T-cell (primary cell): ENCODE measurements at regions of chr1 and their contacts with region 1.

Region 1: GRCh38 chr1:198681831-198682759 is 43.3 kb downstream of the PTPRC start:
- DNase-seq: peak; percentile 40 to 95 (median 81)
- ATAC-seq: peak; percentile 84 to 90 (median 87)
- H3K4me3 ChIP-seq: peak overlapping the region; percentile 18 to 39
- H3K4me3 Mint-ChIP-seq: peak overlapping the region; percentile 53 to 69 (median 68)
- H3K27ac ChIP-seq: peak overlapping the region; percentile 94
- H3K27ac Mint-ChIP-seq: peak overlapping the region; percentile 94 to 99
- H3K4me1 ChIP-seq: peaks cover 31 to 80% of the 10 kb centered on the region in 2 experiments
- H3K4me1 Mint-ChIP-seq: peaks cover 72 to 86% (median 84%) of the 10 kb centered on the region in 3 donors
- H3K27me3 ChIP-seq: no peaks in the 10 kb centered on the region
- H3K27me3 Mint-ChIP-seq: no peaks in the 10 kb centered on the region

Region 2: GRCh38 chr1:198520524-198521254 is 161.4 kb before region 1 on chr1:
- CTCF ChIA-PET with region 1: interaction called, 6 to 16 read pairs
- POLR2A ChIA-PET with region 1: interaction called, 4 to 11 read pairs
- DNase-seq: peak in 2 of 35 experiments; percentile 3 to 56
- ATAC-seq: peak; percentile 50 to 77 (median 74)
- H3K4me3 ChIP-seq: peak overlapping the region; percentile 15 to 34
- H3K4me3 Mint-ChIP-seq: peak overlapping the region; percentile 55 to 69 (median 68)
- H3K27ac ChIP-seq: peak overlapping the region; percentile 79
- H3K27ac Mint-ChIP-seq: peak overlapping the region; percentile 90
- H3K4me1 ChIP-seq: peaks cover 23 to 49% of the 10 kb centered on the region in 2 experiments
- H3K4me1 Mint-ChIP-seq: peaks cover 67 to 81% (median 70%) of the 10 kb centered on the region in 3 donors
- H3K27me3 ChIP-seq: no peaks in the 10 kb centered on the region
- H3K27me3 Mint-ChIP-seq: no peaks in the 10 kb centered on the region

Region 3: DNA sequence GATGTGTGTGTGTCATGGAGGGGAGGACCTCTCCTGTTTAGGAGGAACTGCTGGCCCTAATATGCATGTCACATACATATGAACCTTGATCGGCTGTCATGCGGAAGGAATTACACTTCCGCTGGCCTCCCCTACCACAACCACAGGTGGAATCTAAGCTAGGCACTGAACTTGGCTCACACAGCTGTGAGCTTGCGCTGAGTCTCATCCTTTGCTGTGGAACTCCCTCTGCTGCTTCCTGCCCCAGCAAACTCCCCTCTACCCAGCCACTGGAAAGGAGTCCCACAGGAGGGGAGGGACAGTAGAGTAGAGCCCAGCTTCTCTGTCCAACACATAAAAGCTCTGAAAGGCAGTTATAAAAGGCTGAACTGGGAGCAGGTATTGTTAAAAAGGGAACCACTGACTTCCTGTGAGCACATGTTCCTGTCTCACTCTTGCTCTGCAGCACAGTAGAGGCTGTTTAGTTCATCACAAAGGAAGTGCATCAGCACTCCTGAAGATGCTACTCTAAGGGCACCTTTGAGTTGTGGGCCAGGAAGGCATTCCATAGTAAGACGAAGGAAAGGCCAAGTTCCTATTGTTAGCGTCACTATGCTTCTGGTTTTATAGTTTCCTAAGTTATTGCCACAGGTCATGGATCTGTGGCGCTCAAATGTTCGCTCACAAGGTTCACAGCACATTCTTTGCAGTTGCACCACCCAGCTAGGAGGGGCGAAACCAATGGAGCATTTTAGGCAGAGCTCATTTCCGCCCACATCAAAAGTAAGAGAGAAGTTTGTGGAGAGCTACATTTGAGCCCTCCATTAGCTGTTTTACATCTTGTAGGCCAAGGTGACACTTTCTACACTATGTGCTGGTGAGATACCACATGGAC is 60.9 kb before region 1 on chr1:
- CTCF ChIA-PET with region 1: interaction called, 3 to 19 read pairs
- POLR2A ChIA-PET with region 1: interaction called, 14 to 15 read pairs
- DNase-seq: peak; percentile 42 to 83 (median 56)
- ATAC-seq: peak; percentile 82 to 85 (median 83)
- H3K4me3 ChIP-seq: peak overlapping the region; percentile 38 to 66
- H3K4me3 Mint-ChIP-seq: peak overlapping the region; percentile 68 to 81 (median 70)
- H3K27ac ChIP-seq: peak overlapping the region; percentile 81
- H3K27ac Mint-ChIP-seq: peak overlapping the region; percentile 98 to 100
- H3K4me1 ChIP-seq: peaks cover 54 to 63% of the 10 kb centered on the region in 2 experiments
- H3K4me1 Mint-ChIP-seq: peaks cover 83 to 93% (median 93%) of the 10 kb centered on the region in 3 donors
- H3K27me3 ChIP-seq: no peaks in the 10 kb centered on the region
- H3K27me3 Mint-ChIP-seq: no peaks in the 10 kb centered on the region

Region 4: DNA sequence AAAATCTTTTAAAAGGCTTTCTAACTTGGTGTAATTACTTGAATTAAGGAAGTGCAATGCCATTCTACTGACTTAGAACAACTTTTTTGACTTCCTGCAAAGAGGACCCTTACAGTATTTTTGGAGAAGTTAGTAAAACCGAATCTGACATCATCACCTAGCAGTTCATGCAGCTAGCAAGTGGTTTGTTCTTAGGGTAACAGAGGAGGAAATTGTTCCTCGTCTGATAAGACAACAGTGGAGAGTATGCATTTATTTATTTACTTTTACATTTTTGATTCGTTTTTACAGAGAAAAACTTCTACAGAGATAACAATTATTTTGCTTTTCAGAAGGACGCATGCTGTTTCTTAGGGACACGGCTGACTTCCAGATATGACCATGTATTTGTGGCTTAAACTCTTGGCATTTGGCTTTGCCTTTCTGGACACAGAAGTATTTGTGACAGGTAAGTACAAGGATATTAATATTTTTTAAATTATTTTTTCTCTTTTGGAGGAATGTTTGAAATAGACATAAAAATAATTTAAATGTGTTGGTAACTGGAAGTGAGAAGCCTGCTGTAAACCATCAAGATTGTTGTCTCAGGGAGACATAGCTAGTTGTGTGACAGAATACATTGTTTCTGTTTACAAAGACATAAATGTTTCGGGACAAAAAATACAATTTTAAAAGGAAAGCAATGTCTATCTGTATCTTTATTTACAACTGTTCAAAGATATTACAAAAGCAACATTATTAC is 43.0 kb before region 1 on chr1 and contains the start of gene PTPRC:
- CTCF ChIA-PET with region 1: interaction called, 3 to 9 read pairs
- POLR2A ChIA-PET with region 1: interaction called, 6 to 25 read pairs
- DNase-seq: peak in 4 of 35 experiments; percentile 23 to 76 (median 26)
- ATAC-seq: peak; percentile 76 to 84 (median 81)
- H3K4me3 ChIP-seq: peak within 1 kb of the TSS; percentile 70 to 80
- H3K4me3 Mint-ChIP-seq: peak within 1 kb of the TSS; percentile 79 to 98 (median 81)
- H3K27ac ChIP-seq: peak within 1 kb of the TSS; percentile 85
- H3K27ac Mint-ChIP-seq: peak within 1 kb of the TSS; percentile 95 to 99
- H3K4me1 ChIP-seq: peaks cover 19 to 48% of the 10 kb centered on the region in 2 experiments
- H3K4me1 Mint-ChIP-seq: peaks cover 52 to 70% (median 59%) of the 10 kb centered on the region in 3 donors
- H3K27me3 ChIP-seq: no peaks in the 10 kb centered on the region
- H3K27me3 Mint-ChIP-seq: no peaks in the 10 kb centered on the region
- total RNA-seq, gene PTPRC: 674 to 984 (median 781) TPM

Region 5: GRCh38 chr1:198651650-198652400 is 30.3 kb before region 1 on chr1:
- CTCF ChIA-PET with region 1: interaction called, 5 to 31 read pairs
- POLR2A ChIA-PET with region 1: interaction called, 6 to 49 read pairs
- DNase-seq: no peak
- ATAC-seq: peak; percentile 27 to 34 (median 31)
- H3K4me3 ChIP-seq: peak overlapping the region in 1 of 2 donors; percentile 27
- H3K4me3 Mint-ChIP-seq: peak overlapping the region; percentile 63 to 81 (median 76)
- H3K27ac ChIP-seq: peak overlapping the region; percentile 87
- H3K27ac Mint-ChIP-seq: peak overlapping the region; percentile 94 to 98
- H3K4me1 ChIP-seq: peaks cover 20 to 80% of the 10 kb centered on the region in 2 experiments
- H3K4me1 Mint-ChIP-seq: peaks cover 81 to 85% (median 83%) of the 10 kb centered on the region in 3 donors
- H3K27me3 ChIP-seq: no peaks in the 10 kb centered on the region
- H3K27me3 Mint-ChIP-seq: no peaks in the 10 kb centered on the region

Region 6: DNA sequence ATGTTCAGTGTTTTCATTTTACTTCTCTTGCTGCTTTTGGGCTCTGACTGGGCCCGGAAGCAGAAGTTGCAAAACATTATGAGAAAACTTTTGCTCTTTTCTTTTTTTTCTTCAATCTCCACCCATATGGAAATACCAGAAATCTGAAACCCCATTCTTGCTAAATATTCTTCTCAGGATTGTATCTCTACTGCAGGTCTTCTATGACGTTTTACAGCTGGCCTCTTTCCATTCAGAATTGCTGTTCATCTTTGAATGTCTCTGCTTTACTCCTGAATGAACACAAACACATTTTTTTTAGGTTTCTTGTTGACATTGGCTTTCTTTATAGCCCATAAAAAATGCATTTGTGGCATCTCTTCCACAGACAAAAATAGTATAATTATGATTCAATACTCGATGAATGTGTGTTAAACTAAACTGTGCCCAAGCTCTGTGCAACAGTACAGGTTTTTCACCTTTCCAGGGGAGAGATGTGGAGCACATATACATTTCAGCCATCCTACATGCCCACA is 24.5 kb before region 1 on chr1:
- CTCF ChIA-PET with region 1: interaction called, 3 to 31 read pairs
- POLR2A ChIA-PET with region 1: interaction called, 6 to 49 read pairs
- DNase-seq: peak in 12 of 35 experiments; percentile 19 to 79 (median 28)
- ATAC-seq: peak; percentile 38 to 48 (median 42)
- H3K4me3 ChIP-seq: peak overlapping the region; percentile 4 to 15
- H3K4me3 Mint-ChIP-seq: peak overlapping the region; percentile 65 to 85 (median 73)
- H3K27ac ChIP-seq: peak overlapping the region; percentile 87
- H3K27ac Mint-ChIP-seq: peak overlapping the region; percentile 97 to 98
- H3K4me1 ChIP-seq: peaks cover 22 to 77% of the 10 kb centered on the region in 2 experiments
- H3K4me1 Mint-ChIP-seq: peaks cover 74 to 82% (median 76%) of the 10 kb centered on the region in 3 donors
- H3K27me3 ChIP-seq: no peaks in the 10 kb centered on the region
- H3K27me3 Mint-ChIP-seq: no peaks in the 10 kb centered on the region

Region 7: DNA sequence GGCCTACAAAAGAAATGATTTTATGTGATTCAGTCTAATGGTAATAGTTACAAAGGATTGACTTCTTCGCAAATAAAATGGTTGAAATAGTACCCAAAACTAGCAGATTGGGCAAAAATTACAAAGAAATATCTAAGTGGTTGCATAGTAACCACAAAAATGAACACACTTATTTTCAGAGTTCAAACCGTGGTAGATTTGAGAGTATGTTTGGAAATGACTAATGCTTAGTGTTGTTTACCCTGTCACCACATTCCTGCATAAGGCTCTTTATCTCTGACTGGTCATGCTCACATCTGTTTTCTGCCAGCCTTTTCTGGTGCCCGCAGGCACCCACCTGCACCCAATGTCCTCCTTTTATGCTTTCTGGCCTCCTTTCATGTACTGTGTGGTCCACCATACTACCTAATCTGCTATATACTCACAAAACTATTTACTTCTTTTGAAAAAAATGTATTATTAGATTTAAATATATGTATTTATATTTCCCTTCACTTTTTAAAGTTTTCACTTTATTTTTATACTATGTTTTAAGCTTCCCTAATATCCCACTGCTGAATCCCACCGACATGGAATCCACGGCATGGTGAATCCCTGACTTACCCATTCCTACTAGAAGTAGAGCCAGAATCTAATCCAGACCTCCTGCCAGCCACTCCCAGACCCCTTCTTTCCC is 12.9 kb before region 1 on chr1:
- CTCF ChIA-PET with region 1: interaction called, 4 to 9 read pairs
- POLR2A ChIA-PET with region 1: interaction called, 18 to 33 read pairs
- DNase-seq: peak in 6 of 35 experiments; percentile 18 to 75 (median 24)
- ATAC-seq: peak; percentile 65 to 89 (median 86)
- H3K4me3 ChIP-seq: no peak overlapping the region
- H3K4me3 Mint-ChIP-seq: peak overlapping the region; percentile 61 to 71 (median 69)
- H3K27ac ChIP-seq: peak overlapping the region; percentile 94
- H3K27ac Mint-ChIP-seq: peak overlapping the region; percentile 97 to 98
- H3K4me1 ChIP-seq: peaks cover 43 to 82% of the 10 kb centered on the region in 2 experiments
- H3K4me1 Mint-ChIP-seq: peaks cover 87 to 89% (median 89%) of the 10 kb centered on the region in 3 donors
- H3K27me3 ChIP-seq: no peaks in the 10 kb centered on the region
- H3K27me3 Mint-ChIP-seq: no peaks in the 10 kb centered on the region